ENCODE measurements at regions of chr14 and their contacts with region 1.

Region 1: DNA sequence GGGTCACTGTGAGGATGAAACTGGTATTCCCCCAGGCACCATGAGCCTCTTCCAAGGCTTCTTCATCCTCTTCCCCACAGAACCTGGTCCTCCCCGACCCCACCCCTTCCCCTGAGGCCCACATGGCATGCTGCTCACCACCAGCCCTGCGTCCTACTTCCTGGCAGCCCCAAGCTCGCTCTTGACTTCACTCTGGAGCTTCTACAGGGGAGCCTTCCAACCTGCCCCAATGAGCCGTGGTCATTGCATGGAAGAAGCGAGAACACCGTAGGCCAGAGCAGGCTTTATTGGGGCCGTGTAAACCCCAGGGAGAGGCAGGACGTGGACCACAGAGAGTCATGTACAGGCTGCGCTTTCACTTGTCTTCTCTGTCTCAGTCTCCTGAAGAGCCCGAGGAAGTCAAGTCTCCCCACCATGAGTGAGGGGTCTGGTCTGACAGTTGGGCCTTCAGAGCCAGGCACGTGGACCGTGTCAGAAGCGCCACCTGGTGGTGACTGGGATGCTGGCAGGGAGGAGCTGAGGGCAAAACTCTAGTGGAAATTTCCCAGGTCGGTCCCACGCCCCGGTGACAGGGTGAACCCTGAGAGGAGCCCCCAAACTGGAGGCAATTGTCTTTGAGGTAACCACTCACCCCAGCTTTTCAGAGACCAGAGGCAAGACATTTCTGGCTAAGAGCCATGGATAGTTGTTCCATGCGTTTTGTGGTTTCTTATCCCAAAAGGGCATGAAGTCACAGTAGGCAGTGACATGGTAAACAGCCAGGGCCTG is 17.5 kb downstream of the RPS6KL1 start:
- DNase-seq: no peak
- ATAC-seq: peak; percentile 87
- H3K4me3 ChIP-seq: no peak overlapping the region
- H3K27ac ChIP-seq: no peak overlapping the region
- H3K4me1 ChIP-seq: peaks cover 4% of the 10 kb centered on the region; the same call in 1 of the 2 replicates
- H3K27me3 ChIP-seq: no peaks in the 10 kb centered on the region
- CTCF ChIP-seq: peak; percentile 88 to 96 (median 94)
- EP300 ChIP-seq: no peak
- POLR2A ChIP-seq: peak; percentile 66; the same call in 1 of the 2 replicates
- RAD21 ChIP-seq: peak; percentile 82

Region 2: DNA sequence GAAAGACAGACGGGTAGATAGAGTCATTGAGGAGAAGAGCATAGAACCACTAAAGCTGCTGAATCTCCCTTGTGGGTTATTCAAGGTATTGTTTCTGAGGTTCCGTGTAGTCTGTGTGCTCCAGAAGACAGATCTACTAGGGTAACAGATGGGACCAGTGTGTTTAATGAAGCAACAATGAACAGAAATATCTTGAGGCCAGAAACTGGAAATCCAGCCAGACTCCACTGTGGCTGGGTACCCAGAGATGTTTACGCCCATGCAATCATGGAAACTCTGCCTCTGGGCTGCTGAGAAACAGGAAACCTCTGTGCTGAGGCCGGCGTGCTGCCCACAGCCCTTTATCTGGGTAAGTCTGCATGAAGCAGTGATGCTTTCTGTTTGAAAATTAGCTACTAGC is 37.9 kb before region 1 on chr14:
- CTCF ChIA-PET with region 1: interaction called, 552 read pairs
- POLR2A ChIA-PET with region 1: no interaction called
- RAD21 ChIA-PET with region 1: interaction called, 114 read pairs
- SMC1A ChIA-PET with region 1: interaction called, 165 read pairs
- in situ Hi-C with region 1: no loop called
- intact Hi-C with region 1: no loop called
- DNase-seq: no peak
- ATAC-seq: peak; percentile 32; the same call in 1 of the 3 replicates
- H3K4me3 ChIP-seq: no peak overlapping the region
- H3K27ac ChIP-seq: no peak overlapping the region
- H3K4me1 ChIP-seq: no peaks in the 10 kb centered on the region
- H3K27me3 ChIP-seq: no peaks in the 10 kb centered on the region; a peak in 1 of 4 replicates
- CTCF ChIP-seq: no peak
- EP300 ChIP-seq: no peak
- POLR2A ChIP-seq: no peak
- RAD21 ChIP-seq: no peak

Region 3: GRCh38 chr14:74881431-74882361 is 23.9 kb before region 1 on chr14 and contains the start of gene DLST:
- CTCF ChIA-PET with region 1: interaction called, 73 read pairs
- POLR2A ChIA-PET with region 1: interaction called, 3 read pairs
- RAD21 ChIA-PET with region 1: interaction called, 11 read pairs
- SMC1A ChIA-PET with region 1: interaction called, 15 read pairs
- in situ Hi-C with region 1: no loop called
- intact Hi-C with region 1: no loop called
- DNase-seq: peak; percentile 39
- ATAC-seq: peak; percentile 94
- H3K4me3 ChIP-seq: peak within 1 kb of the TSS; percentile 90
- H3K27ac ChIP-seq: peak within 1 kb of the TSS; percentile 81
- H3K4me1 ChIP-seq: peaks cover 8% of the 10 kb centered on the region
- H3K27me3 ChIP-seq: no peaks in the 10 kb centered on the region
- CTCF ChIP-seq: no peak
- EP300 ChIP-seq: no peak
- POLR2A ChIP-seq: peak; percentile 95
- RAD21 ChIP-seq: no peak
- polyA plus RNA-seq, gene DLST: 2.9 to 12.2 TPM

Region 4: DNA sequence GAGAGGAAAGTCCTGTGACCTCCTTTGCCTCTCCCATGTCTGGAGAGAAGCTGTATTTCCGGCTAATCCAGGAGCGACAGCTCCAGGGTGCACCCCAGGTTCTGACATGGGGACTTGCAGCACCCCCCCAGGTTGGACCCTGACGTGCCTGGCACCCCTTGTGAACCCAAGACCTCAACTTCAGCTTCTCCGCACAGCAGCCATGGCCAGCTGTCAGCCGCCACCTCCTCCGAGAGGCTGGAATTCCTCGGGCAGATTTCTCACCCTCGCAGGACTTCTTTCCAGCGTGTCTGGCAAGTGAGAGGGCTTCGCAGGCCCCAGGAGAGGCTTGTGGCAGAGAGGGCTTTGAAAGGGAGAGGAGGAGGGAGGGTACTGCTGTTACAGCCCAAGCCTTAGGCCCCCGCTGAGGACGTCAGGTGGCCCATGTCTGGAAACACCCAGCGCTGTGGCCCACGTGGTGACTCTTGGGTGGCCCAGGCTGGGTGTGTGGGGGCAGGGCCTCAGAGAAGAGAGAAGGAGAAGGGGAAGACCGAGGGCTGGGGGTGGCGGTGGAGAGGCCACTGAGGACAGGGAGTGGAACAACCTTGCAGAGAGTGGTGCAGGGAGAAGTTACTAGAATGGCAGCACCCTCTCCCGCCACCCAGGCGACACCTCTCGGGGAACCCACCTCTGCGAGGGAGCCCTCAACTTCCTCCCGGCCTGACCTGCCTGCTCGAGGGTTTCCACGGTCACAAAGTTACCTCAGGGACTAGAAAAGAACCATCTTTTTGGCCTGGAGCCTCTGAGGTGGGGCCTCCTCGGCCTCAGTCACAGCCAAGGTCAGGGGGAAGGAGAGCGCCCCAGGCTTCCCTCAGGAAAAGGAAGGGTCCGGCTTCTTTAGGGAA is 29.2 kb after region 1 on chr14:
- CTCF ChIA-PET with region 1: interaction called, 10 read pairs
- POLR2A ChIA-PET with region 1: no interaction called
- RAD21 ChIA-PET with region 1: interaction called, 3 read pairs
- SMC1A ChIA-PET with region 1: interaction called, 3 read pairs
- in situ Hi-C with region 1: no loop called
- intact Hi-C with region 1: no loop called
- DNase-seq: no peak
- ATAC-seq: peak; percentile 53
- H3K4me3 ChIP-seq: no peak overlapping the region
- H3K27ac ChIP-seq: no peak overlapping the region
- H3K4me1 ChIP-seq: peaks cover 19% of the 10 kb centered on the region
- H3K27me3 ChIP-seq: no peaks in the 10 kb centered on the region
- CTCF ChIP-seq: no peak
- EP300 ChIP-seq: no peak
- POLR2A ChIP-seq: no peak
- RAD21 ChIP-seq: no peak

Measured in GM12878 (cell line).